H1 (cell line): ENCODE measurements at regions of chr4 and their contacts with region 1.

Region 1: GRCh38 chr4:82739316-82740179 is 59.0 kb downstream of the SCD5 start:
- DNase-seq: peak; percentile 61 to 97
- H3K4me3 ChIP-seq: no peak overlapping the region
- H3K27ac ChIP-seq: no peak overlapping the region
- H3K4me1 ChIP-seq: peaks cover 0 to 2% (median 0%) of the 10 kb centered on the region in 4 experiments; a peak in 1 of 7 replicates
- H3K27me3 ChIP-seq: no peaks in the 10 kb centered on the region
- CTCF ChIP-seq: peak; percentile 100
- EP300 ChIP-seq: no peak
- POLR2A ChIP-seq: no peak
- RAD21 ChIP-seq: peak; percentile 100

Region 2: DNA sequence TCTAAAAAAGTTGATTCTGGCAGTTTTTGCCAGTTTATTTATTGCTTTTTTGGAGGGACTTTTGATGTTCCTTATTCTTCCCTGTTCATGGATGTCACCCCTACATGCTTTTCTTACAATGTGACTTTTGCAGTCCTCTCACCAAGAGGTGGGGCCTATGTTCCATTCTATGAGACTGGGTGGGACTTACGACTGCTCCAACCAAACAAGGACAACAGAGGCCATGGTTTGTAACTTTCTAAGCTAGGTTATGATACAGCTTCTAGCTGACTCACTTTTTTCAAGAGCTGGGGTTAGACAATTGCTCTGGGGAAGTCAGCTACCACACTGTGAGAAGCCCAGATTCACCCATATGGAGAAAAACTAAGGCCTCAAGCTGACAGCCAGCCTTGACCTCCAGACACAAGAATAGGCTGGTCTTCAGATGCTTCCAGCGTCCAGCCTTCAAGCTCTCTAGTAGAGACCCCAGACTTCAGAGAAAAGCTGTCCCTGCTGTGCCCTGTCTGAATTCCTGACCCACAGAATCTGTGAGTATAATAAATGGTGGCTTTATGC is 269.7 kb before region 1 on chr4:
- CTCF ChIA-PET with region 1: interaction called, 160 read pairs
- POLR2A ChIA-PET with region 1: interaction called, 3 read pairs
- DNase-seq: no peak
- H3K4me3 ChIP-seq: no peak overlapping the region
- H3K27ac ChIP-seq: no peak overlapping the region
- H3K4me1 ChIP-seq: 0 out of 7 replicates have a peak, but pooled peaks cover 0 to 2% (median 0%) of the 10 kb centered on the region in 4 experiments
- H3K27me3 ChIP-seq: no peaks in the 10 kb centered on the region
- CTCF ChIP-seq: no peak
- EP300 ChIP-seq: no peak
- POLR2A ChIP-seq: peak in 1 of 2 experiments; percentile 20; a peak in 1 of 3 replicates
- RAD21 ChIP-seq: peak; percentile 36 to 45

Region 3: DNA sequence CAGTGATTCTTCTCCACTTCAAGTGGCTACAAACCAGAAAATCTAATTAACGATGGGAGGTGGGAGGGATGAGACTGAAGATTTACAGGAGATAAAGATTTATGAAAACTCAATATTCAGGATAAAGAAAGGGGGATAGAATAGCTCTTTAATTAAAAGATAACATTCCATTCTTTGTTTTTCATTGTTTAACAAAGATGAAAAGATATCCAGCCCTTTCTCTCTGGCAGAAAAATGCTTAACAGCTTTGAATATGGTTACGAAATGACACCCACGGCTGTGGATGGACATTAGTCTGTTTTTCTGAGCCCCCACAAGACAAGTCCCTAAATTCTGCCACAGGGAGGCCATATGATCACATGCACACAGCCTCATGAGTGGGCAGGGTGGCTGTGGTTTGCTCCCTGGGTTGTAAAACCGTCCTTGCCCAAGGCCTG is 214.1 kb before region 1 on chr4:
- CTCF ChIA-PET with region 1: interaction called, 15 read pairs
- POLR2A ChIA-PET with region 1: no interaction called
- DNase-seq: no peak
- H3K4me3 ChIP-seq: no peak overlapping the region
- H3K27ac ChIP-seq: no peak overlapping the region
- H3K4me1 ChIP-seq: peaks cover 0 to 8% (median 3%) of the 10 kb centered on the region in 4 experiments; a peak in 5 of 7 replicates
- H3K27me3 ChIP-seq: no peaks in the 10 kb centered on the region
- CTCF ChIP-seq: no peak
- EP300 ChIP-seq: no peak
- POLR2A ChIP-seq: no peak
- RAD21 ChIP-seq: no peak

Region 4: DNA sequence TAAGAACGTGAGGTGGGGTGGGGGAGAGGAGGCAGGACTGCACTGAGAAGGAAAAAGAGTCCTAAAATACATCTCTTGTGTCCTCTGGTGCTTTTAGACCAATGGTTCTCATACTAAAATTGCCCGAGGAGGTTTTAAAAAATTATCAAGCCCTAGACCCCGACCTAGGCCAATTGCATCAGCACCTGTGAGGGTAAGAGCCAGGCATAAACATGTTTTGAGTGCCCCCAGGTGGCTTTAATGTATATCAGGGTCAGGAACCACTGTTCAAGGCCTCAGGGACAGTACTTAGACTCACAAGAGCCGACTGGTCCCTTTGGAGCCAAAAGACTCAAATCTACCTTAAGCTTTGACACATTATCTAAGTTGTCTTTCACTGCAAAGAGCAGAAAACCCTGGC is 140.2 kb before region 1 on chr4:
- CTCF ChIA-PET with region 1: interaction called, 26 read pairs
- POLR2A ChIA-PET with region 1: no interaction called
- DNase-seq: peak in 1 of 2 experiments; percentile 31
- H3K4me3 ChIP-seq: no peak overlapping the region
- H3K27ac ChIP-seq: no peak overlapping the region
- H3K4me1 ChIP-seq: peaks cover 0 to 4% (median 0%) of the 10 kb centered on the region in 4 experiments; a peak in 1 of 7 replicates
- H3K27me3 ChIP-seq: no peaks in the 10 kb centered on the region
- CTCF ChIP-seq: peak; percentile 18 to 79 (median 67)
- EP300 ChIP-seq: no peak
- POLR2A ChIP-seq: no peak
- RAD21 ChIP-seq: peak; percentile 83 to 90

Region 5: GRCh38 chr4:82706349-82707000 is 33.1 kb before region 1 on chr4:
- CTCF ChIA-PET with region 1: interaction called, 60 read pairs
- POLR2A ChIA-PET with region 1: interaction called, 3 read pairs
- DNase-seq: no peak
- H3K4me3 ChIP-seq: no peak overlapping the region
- H3K27ac ChIP-seq: no peak overlapping the region
- H3K4me1 ChIP-seq: peaks cover 1 to 6% (median 3%) of the 10 kb centered on the region in 4 experiments; a peak in 6 of 7 replicates
- H3K27me3 ChIP-seq: no peaks in the 10 kb centered on the region
- CTCF ChIP-seq: no peak
- EP300 ChIP-seq: no peak
- POLR2A ChIP-seq: no peak
- RAD21 ChIP-seq: no peak

Region 6: GRCh38 chr4:82728301-82728700 is 11.2 kb before region 1 on chr4:
- CTCF ChIA-PET with region 1: interaction called, 57 read pairs
- POLR2A ChIA-PET with region 1: interaction called, 4 read pairs
- DNase-seq: no peak
- H3K4me3 ChIP-seq: no peak overlapping the region
- H3K27ac ChIP-seq: no peak overlapping the region
- H3K4me1 ChIP-seq: no peaks in the 10 kb centered on the region
- H3K27me3 ChIP-seq: no peaks in the 10 kb centered on the region
- CTCF ChIP-seq: no peak
- EP300 ChIP-seq: no peak
- POLR2A ChIP-seq: no peak
- RAD21 ChIP-seq: no peak

Region 7: GRCh38 chr4:82798168-82799005 is 58.8 kb after region 1 on chr4 and contains the start of gene SCD5:
- CTCF ChIA-PET with region 1: interaction called, 14 read pairs
- POLR2A ChIA-PET with region 1: no interaction called
- DNase-seq: peak in 1 of 2 experiments; percentile 64
- H3K4me3 ChIP-seq: peak within 1 kb of the TSS; percentile 24 to 79 (median 42)
- H3K27ac ChIP-seq: no peak within 1 kb of the TSS
- H3K4me1 ChIP-seq: peaks cover 0 to 12% (median 3%) of the 10 kb centered on the region in 4 experiments
- H3K27me3 ChIP-seq: peaks cover 65 to 86% (median 81%) of the 10 kb centered on the region in 4 experiments
- CTCF ChIP-seq: no peak
- EP300 ChIP-seq: no peak
- POLR2A ChIP-seq: no peak
- RAD21 ChIP-seq: no peak
- total RNA-seq, gene SCD5: 0.88 and 1.2 TPM in 2 replicates